ENCODE measurements at regions of chr15 and their contacts with region 1.

Region 1: DNA sequence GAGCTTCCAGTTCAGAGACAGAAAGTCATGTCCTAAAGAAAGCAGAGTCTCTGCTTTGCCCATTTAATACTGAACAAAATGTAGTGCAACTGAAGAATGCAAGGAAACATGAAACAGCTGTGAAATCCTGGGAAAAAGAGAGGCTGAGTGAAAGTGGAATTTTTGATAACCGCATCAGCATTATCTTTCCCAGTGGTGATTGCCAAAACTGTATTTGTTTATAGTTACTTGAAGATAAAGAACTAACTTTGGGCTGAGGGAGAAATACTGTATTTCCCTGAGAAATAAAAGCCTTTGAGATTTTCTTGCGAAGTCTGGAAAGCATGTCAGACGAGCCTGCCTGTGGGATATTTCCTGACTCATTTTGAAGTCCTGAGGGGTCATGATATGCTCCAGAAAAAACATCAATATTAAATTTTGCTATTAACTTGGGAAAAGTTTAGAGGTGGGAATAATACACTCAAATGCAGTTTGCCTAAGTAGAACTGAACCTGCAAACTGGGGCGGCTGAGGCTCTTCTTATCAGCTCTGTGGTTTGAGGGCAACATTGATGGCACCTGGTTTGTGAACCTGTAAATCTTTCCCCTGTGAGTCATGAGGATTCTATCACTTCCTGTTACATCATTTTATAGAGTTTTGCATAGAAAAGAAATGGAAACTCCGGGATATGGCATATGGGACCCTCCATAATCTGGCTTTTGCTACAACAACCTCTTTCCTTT is 855.3 kb downstream of the MCTP2 start:
- DNase-seq: peak; percentile 27
- H3K4me3 Mint-ChIP-seq: no peak overlapping the region
- H3K27ac Mint-ChIP-seq: peak overlapping the region; percentile 60
- H3K4me1 Mint-ChIP-seq: peaks cover 16% of the 10 kb centered on the region
- H3K27me3 Mint-ChIP-seq: no peaks in the 10 kb centered on the region
- CTCF ChIP-seq: no peak

Region 2: DNA sequence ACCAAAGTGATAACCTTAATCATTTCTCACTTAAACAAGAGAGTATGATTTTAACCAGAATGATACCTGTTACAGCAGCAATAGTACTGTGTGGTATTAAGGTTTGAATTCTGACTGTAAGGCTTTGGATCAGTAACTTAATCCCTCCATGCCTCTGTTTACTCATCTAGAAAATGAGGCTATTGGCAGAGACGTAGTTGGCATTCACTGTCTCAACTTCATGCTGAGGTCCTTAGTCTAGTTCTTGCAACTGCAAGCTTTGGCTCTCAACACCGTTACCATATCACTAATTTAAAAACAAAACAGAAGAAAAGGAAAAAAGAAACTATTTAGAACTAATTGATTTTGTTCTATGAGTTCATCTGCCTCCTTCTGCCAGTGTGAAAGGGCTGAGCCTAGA is 20.1 kb after region 1 on chr15:
- CTCF ChIA-PET with region 1: no interaction called
- intact Hi-C with region 1: loop called (anchors 1 kb)
- DNase-seq: no peak
- H3K4me3 Mint-ChIP-seq: no peak overlapping the region
- H3K27ac Mint-ChIP-seq: no peak overlapping the region
- H3K4me1 Mint-ChIP-seq: no peaks in the 10 kb centered on the region
- H3K27me3 Mint-ChIP-seq: no peaks in the 10 kb centered on the region
- CTCF ChIP-seq: no peak

Region 3: GRCh38 chr15:95793231-95793630 is 706.5 kb after region 1 on chr15:
- CTCF ChIA-PET with region 1: no interaction called
- intact Hi-C with region 1: no loop called
- DNase-seq: no peak
- H3K4me3 Mint-ChIP-seq: no peak overlapping the region
- H3K27ac Mint-ChIP-seq: no peak overlapping the region
- H3K4me1 Mint-ChIP-seq: no peaks in the 10 kb centered on the region
- H3K27me3 Mint-ChIP-seq: no peaks in the 10 kb centered on the region
- CTCF ChIP-seq: no peak

Measured in Calu3 (cell line).